Ascending aorta (tissue), 2 donors: ENCODE measurements at regions of chr11 and their contacts with region 1.

Region 1: GRCh38 chr11:62831520-62832335 is at the start of gene STX5:
- DNase-seq: peak; percentile 96 to 100
- H3K4me3 ChIP-seq: peak within 1 kb of the TSS; percentile 74 to 77
- H3K27ac ChIP-seq: peak within 1 kb of the TSS; percentile 90 to 95
- H3K4me1 ChIP-seq: peaks cover 0 to 31% of the 10 kb centered on the region in 2 donors
- H3K27me3 ChIP-seq: no peaks in the 10 kb centered on the region
- CTCF ChIP-seq: no peak
- total RNA-seq, gene STX5: 40.3 TPM

Region 2: DNA sequence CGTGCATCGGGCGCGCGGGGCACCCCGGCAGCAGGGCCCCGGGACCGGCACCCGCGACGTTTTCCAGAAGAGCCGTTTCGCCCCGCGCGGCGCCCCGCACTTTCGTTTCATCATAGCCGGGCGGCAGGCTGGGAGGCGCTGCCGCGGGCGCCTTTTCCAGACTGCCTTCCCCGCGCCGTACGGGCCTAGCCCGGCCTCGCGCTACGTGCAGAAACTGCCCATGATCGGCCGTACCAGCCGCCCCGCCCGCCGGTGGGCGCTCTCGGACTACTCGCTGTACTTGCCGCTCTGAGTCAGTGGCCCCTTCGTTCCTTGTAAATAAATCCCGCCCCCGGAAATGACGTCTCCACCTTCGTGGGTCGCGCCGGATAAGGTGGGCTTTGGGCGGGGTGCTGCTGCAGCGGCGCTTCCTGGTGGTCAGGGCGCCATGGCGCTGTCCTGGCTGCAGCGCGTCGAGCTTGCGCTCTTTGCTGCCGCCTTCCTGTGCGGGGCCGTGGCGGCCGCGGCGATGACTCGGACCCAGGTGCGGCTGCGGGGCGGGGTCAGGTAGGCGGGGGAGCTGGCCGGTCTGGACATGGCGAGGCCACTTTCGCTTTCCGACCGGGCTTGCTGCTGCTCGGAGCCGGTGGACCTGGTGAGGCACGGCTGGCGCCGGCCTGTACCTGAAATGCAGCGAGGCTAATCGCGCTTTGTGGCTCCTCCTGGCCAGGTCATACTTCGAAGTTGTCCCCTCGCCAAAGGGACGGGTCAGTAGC is 44.5 kb before region 1 on chr11 and contains the start of gene TMEM179B:
- intact Hi-C with region 1: loop called (anchors 1 kb)
- DNase-seq: peak; percentile 96 to 100
- H3K4me3 ChIP-seq: peak within 1 kb of the TSS; percentile 78 to 94
- H3K27ac ChIP-seq: peak within 1 kb of the TSS; percentile 86 to 97
- H3K4me1 ChIP-seq: peaks cover 4 to 25% of the 10 kb centered on the region in 2 donors
- H3K27me3 ChIP-seq: no peaks in the 10 kb centered on the region
- CTCF ChIP-seq: peak; percentile 59 to 75 (median 62)
- total RNA-seq, gene TMEM179B: 102 TPM

Region 3: DNA sequence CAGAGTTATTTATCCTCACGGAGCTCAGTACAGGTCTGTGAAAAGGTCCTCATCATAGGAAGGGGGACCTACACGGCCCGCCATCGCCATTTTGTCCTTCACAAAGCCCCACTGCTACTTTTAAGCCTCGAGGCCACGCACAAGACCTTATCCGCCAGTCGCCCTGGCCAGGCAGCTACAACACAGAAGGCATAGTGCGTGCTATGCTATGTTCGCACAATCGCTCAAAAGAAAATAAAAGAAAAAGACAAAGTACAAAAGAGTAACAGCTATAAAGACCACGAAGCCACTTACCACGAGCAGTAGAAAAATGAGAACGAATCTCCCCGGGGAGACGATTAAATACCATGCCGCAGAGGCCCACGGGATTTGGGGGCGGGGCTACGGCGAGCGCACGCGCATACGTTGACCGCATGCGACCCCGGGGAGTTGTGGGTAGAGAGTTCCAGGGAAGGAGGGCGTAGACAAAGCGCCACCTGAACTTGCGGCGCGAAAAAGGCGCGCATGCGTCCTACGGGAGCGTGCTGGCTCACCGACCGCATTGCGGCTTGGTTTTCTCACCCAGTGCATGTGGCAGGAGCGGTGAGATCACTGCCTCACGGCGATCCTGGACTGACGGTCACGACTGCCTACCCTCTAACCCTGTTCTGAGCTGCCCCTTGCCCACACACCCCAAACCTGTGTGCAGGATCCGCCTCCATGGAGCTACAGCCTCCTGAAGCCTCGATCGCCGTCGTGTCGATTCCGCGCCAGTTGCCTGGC is 24.0 kb after region 1 on chr11:
- intact Hi-C with region 1: loop called (anchors 1 kb)
- DNase-seq: peak; percentile 87 to 97
- H3K4me3 ChIP-seq: peak overlapping the region; percentile 77 to 78
- H3K27ac ChIP-seq: peak overlapping the region; percentile 59 to 69
- H3K4me1 ChIP-seq: peaks cover 10 to 15% of the 10 kb centered on the region in 2 donors
- H3K27me3 ChIP-seq: no peaks in the 10 kb centered on the region
- CTCF ChIP-seq: no peak